Activated CD4-positive, alpha-beta T cell treated with anti-CD3 and anti-CD28 coated beads for 36 hours (primary cell): ENCODE measurements at regions of chr13 and their contacts with region 1.

Region 1: DNA sequence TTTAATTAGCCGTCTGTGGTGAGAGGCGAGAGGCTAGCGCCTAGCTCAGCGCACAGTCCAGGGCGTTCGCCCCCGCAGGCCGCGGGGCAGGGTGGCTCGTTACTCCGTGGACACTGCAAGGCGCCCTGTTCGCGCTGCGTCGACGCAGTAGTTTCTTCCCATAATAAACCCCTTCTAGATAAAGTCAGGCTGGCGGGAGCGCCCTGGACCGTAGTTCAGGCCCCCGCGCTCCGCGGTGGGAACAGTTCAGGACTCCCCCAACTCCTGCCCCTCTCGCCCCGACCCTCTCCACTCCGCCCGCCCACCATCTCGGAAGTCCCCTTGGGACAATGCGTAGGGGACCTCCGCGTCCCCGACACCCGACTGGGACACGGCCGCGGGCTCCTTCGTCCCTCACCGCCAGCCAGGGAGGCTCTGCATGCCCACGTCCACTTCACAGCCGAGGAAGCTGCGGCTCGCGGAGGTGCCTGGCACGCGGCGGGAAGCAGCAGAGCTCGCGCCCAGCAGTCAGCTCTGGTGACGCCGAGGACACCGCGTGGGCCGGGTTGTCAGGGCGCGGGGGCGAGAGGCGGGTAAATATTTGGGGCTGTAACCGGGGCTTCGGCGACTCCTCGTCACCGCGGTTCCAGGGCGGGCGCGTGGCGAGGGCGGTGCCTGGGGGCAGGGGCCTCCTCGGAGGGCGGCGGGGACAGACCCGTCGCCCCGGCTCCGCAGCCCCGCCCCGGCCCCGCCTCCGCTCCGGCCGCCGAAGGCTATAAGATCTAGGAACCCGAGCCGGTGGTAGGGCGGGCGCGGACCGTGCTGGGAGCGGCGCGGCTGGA is at the start of gene RGCC:
- DNase-seq: peak; percentile 96
- ATAC-seq: peak; percentile 74
- H3K4me3 Mint-ChIP-seq: peak within 1 kb of the TSS; percentile 82
- H3K27ac Mint-ChIP-seq: peak within 1 kb of the TSS; percentile 97
- H3K4me1 Mint-ChIP-seq: peaks cover 36% of the 10 kb centered on the region
- H3K27me3 Mint-ChIP-seq: no peaks in the 10 kb centered on the region
- total RNA-seq, gene RGCC: 134 to 146 TPM

Region 2: GRCh38 chr13:41193919-41194824 is 262.8 kb before region 1 on chr13 and contains the start of gene KBTBD7:
- CTCF ChIA-PET with region 1: no interaction called
- POLR2A ChIA-PET with region 1: no interaction called
- intact Hi-C with region 1: loop called in 1 of 2 experiments (anchors 5 kb)
- DNase-seq: peak; percentile 98
- ATAC-seq: peak; percentile 96
- H3K4me3 Mint-ChIP-seq: peak within 1 kb of the TSS; percentile 83
- H3K27ac Mint-ChIP-seq: peak within 1 kb of the TSS; percentile 98
- H3K4me1 Mint-ChIP-seq: peaks cover 50% of the 10 kb centered on the region
- H3K27me3 Mint-ChIP-seq: no peaks in the 10 kb centered on the region
- total RNA-seq, gene KBTBD7: 3.7 to 4.5 TPM

Region 3: GRCh38 chr13:41434831-41435520 is 22.0 kb before region 1 on chr13:
- CTCF ChIA-PET with region 1: no interaction called
- POLR2A ChIA-PET with region 1: interaction called, 11 read pairs
- intact Hi-C with region 1: no loop called
- DNase-seq: no peak
- ATAC-seq: no peak
- H3K4me3 Mint-ChIP-seq: no peak overlapping the region
- H3K27ac Mint-ChIP-seq: no peak overlapping the region
- H3K4me1 Mint-ChIP-seq: no peaks in the 10 kb centered on the region
- H3K27me3 Mint-ChIP-seq: no peaks in the 10 kb centered on the region

Region 4: GRCh38 chr13:41502673-41503072 is 45.7 kb after region 1 on chr13:
- CTCF ChIA-PET with region 1: interaction called, 22 read pairs
- POLR2A ChIA-PET with region 1: interaction called, 4 read pairs
- intact Hi-C with region 1: no loop called
- DNase-seq: peak; percentile 27
- ATAC-seq: no peak
- H3K4me3 Mint-ChIP-seq: no peak overlapping the region
- H3K27ac Mint-ChIP-seq: peak overlapping the region; percentile 56
- H3K4me1 Mint-ChIP-seq: peaks cover 57% of the 10 kb centered on the region
- H3K27me3 Mint-ChIP-seq: no peaks in the 10 kb centered on the region

Region 5: GRCh38 chr13:41652727-41653361 is 195.9 kb after region 1 on chr13:
- CTCF ChIA-PET with region 1: interaction called, 23 read pairs
- POLR2A ChIA-PET with region 1: interaction called, 5 read pairs
- intact Hi-C with region 1: loop called in 1 of 2 experiments (anchors 2 kb)
- DNase-seq: peak; percentile 55
- ATAC-seq: no peak
- H3K4me3 Mint-ChIP-seq: no peak overlapping the region
- H3K27ac Mint-ChIP-seq: no peak overlapping the region
- H3K4me1 Mint-ChIP-seq: peaks cover 23% of the 10 kb centered on the region
- H3K27me3 Mint-ChIP-seq: no peaks in the 10 kb centered on the region

Region 6: GRCh38 chr13:42048682-42049453 is 591.9 kb after region 1 on chr13:
- CTCF ChIA-PET with region 1: no interaction called
- POLR2A ChIA-PET with region 1: no interaction called
- intact Hi-C with region 1: loop called (anchors 5 to 10 kb)
- DNase-seq: peak; percentile 82
- ATAC-seq: peak; percentile 68
- H3K4me3 Mint-ChIP-seq: peak overlapping the region; percentile 86
- H3K27ac Mint-ChIP-seq: no peak overlapping the region
- H3K4me1 Mint-ChIP-seq: peaks cover 24% of the 10 kb centered on the region
- H3K27me3 Mint-ChIP-seq: no peaks in the 10 kb centered on the region